Natural killer cell (primary cell): ENCODE measurements at regions of chr9 and their contacts with region 1.

Region 1: GRCh38 chr9:137240861-137241489 is at the start of gene TUBB4B:
- DNase-seq: peak; percentile 96 to 100
- ATAC-seq: peak; percentile 73 to 90 (median 76)
- H3K4me3 ChIP-seq: peak within 1 kb of the TSS; percentile 46
- H3K4me3 Mint-ChIP-seq: peak within 1 kb of the TSS; percentile 88
- H3K27ac ChIP-seq: peak within 1 kb of the TSS; percentile 81
- H3K27ac Mint-ChIP-seq: peak within 1 kb of the TSS; percentile 86 to 94
- H3K4me1 ChIP-seq: peaks cover 53% of the 10 kb centered on the region
- H3K4me1 Mint-ChIP-seq: peaks cover 19 to 33% of the 10 kb centered on the region in 2 donors
- H3K27me3 ChIP-seq: no peaks in the 10 kb centered on the region
- H3K27me3 Mint-ChIP-seq: peaks cover 0 to 4% of the 10 kb centered on the region in 2 donors
- CTCF ChIP-seq: no peak
- total RNA-seq, gene TUBB4B: 84.4 to 121 (median 93.9) TPM

Region 2: DNA sequence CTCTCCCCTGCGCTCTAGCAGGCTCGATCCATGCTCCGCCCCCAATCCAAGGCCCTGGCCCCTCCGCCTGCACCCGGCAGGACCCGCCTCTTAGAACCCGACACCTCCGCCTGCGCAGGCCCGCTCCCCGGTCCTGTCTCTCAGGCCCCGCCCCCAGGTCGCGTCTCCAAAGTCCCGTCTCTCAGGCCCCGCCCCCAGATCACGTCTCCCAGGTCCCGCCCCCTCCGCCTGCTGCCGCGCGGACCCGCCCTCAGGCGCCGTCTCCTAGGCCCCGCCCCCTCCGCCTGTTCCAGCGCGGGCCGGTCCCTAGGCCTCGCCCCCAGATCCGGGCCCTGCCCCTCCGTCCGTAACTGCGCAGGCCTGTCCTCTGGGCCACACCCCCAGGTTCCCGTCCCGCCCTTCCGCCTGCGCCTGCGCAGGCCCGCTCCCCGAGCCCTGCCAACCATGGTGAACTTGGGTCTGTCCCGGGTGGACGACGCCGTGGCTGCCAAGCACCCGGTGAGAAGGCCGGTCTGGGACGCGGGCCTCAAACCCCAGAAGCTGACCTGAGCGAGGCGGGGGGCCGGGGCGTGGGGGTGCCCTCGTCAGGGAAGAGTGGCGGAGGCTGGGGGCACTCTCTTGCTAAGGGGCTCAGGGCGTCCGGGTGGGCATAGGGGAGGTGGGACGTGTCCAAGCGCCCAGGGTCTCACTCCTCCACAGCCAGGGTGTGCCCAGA is 449.9 kb before region 1 on chr9 and contains the start of gene TMEM141:
- intact Hi-C with region 1: loop called (anchors 5 kb)
- DNase-seq: peak; percentile 99 to 100
- ATAC-seq: peak; percentile 84 to 96 (median 86)
- H3K4me3 ChIP-seq: peak within 1 kb of the TSS; percentile 66
- H3K4me3 Mint-ChIP-seq: peak within 1 kb of the TSS; percentile 80
- H3K27ac ChIP-seq: peak within 1 kb of the TSS; percentile 88
- H3K27ac Mint-ChIP-seq: peak within 1 kb of the TSS; percentile 89 to 91
- H3K4me1 ChIP-seq: peaks cover 43% of the 10 kb centered on the region
- H3K4me1 Mint-ChIP-seq: peaks cover 28 to 34% of the 10 kb centered on the region in 2 donors
- H3K27me3 ChIP-seq: no peaks in the 10 kb centered on the region
- H3K27me3 Mint-ChIP-seq: peaks cover 0 to 4% of the 10 kb centered on the region in 2 donors
- CTCF ChIP-seq: no peak
- total RNA-seq, gene TMEM141: 22.4 to 26.9 (median 26.6) TPM

Region 3: DNA sequence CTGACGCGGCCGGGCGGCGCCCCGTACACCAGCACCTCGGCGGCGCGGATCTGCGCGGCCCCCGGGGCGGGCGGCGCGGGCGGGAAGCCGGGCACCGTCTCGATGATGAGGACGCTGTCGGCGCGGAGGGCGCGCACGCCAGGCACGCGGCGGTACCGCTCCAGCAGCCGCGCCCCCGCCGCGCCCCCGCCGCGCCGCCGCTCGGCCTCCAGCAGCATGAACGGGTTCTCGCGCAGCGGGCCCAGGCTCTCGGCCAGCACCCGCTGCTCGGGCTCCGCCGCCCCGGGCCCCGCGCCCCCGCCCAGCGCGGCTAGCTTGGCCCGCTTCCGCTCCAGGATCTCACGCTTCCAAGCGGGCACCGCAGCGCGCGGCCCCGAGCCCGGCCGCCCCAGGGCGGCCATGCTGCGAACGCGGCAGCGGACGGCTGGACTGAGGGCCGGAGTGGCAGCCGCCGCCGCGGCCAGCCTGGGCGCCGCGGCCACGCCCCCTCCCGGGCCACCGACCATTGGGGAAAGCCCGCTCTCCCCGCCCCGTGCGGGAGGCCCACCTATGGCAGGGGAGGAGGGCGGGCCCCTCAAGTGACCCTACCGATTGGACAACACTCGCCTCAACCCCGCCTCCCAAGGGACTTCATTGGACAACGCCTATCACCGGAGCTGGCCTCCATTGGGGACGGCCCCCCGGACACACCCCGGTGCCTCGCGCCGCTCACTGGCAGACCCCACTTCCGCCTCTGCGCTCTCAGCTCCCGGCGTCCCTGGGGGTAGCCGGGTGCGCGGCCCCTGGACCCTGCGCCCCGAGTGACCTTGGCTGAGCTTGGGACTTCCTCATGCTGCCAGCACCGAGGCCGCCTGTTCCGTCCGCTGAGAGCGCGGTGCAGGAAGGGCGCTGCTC is 40.4 kb before region 1 on chr9 and contains the start of gene TPRN:
- intact Hi-C with region 1: loop called (anchors 5 kb)
- DNase-seq: peak; percentile 98
- ATAC-seq: peak; percentile 92 to 99 (median 94)
- H3K4me3 ChIP-seq: peak within 1 kb of the TSS; percentile 75
- H3K4me3 Mint-ChIP-seq: peak within 1 kb of the TSS; percentile 90
- H3K27ac ChIP-seq: peak within 1 kb of the TSS; percentile 82
- H3K27ac Mint-ChIP-seq: peak within 1 kb of the TSS; percentile 83 to 86
- H3K4me1 ChIP-seq: peaks cover 39% of the 10 kb centered on the region
- H3K4me1 Mint-ChIP-seq: peaks cover 16 to 32% of the 10 kb centered on the region in 2 donors
- H3K27me3 ChIP-seq: no peaks in the 10 kb centered on the region
- H3K27me3 Mint-ChIP-seq: no peaks in the 10 kb centered on the region
- CTCF ChIP-seq: no peak
- total RNA-seq, gene TPRN: 8.2 to 10.6 (median 8.4) TPM

Region 4: GRCh38 chr9:137254624-137255447 is 13.9 kb after region 1 on chr9 and contains the start of gene NELFB:
- intact Hi-C with region 1: loop called (anchors 1 kb)
- DNase-seq: peak; percentile 95 to 99
- ATAC-seq: peak; percentile 93 to 96 (median 94)
- H3K4me3 ChIP-seq: peak within 1 kb of the TSS; percentile 85
- H3K4me3 Mint-ChIP-seq: peak within 1 kb of the TSS; percentile 88
- H3K27ac ChIP-seq: no peak within 1 kb of the TSS
- H3K27ac Mint-ChIP-seq: peak within 1 kb of the TSS; percentile 36 to 81
- H3K4me1 ChIP-seq: peaks cover 25% of the 10 kb centered on the region
- H3K4me1 Mint-ChIP-seq: peaks cover 0 to 6% of the 10 kb centered on the region in 2 donors
- H3K27me3 ChIP-seq: no peaks in the 10 kb centered on the region
- H3K27me3 Mint-ChIP-seq: no peaks in the 10 kb centered on the region
- CTCF ChIP-seq: no peak
- total RNA-seq, gene NELFB: 42.9 to 53.8 (median 52.6) TPM

Region 5: DNA sequence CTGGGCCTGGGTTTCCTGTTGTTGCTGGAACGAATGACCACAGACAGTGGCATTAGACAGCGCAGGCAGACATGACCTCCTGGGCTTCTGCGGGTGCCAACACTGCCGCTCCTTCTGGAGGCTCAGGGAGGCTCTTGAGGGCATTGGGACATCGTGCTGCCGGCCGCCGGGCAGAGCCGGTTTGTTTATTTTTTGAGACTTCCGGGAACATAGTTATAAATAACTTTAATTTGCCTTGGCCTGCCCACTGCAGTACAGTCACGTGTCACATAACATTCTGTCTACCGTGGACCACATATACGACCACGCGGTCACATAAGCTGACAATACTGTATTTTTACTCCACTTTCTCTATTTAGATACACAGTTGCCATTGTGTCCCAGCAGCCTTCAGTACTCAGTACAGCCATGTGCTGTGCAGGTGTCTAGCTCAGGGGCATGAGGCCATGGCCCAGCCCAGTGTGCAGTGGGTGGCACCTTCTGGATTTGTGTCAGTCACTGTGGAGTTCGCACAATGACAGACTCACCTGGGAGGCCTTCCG is 28.3 kb after region 1 on chr9:
- intact Hi-C with region 1: no loop called
- DNase-seq: no peak
- ATAC-seq: peak in 1 of 3 donors; percentile 18
- H3K4me3 ChIP-seq: no peak overlapping the region
- H3K4me3 Mint-ChIP-seq: no peak overlapping the region
- H3K27ac ChIP-seq: no peak overlapping the region
- H3K27ac Mint-ChIP-seq: no peak overlapping the region
- H3K4me1 ChIP-seq: peaks cover 26% of the 10 kb centered on the region
- H3K4me1 Mint-ChIP-seq: peaks cover 4 to 15% of the 10 kb centered on the region in 2 donors
- H3K27me3 ChIP-seq: no peaks in the 10 kb centered on the region
- H3K27me3 Mint-ChIP-seq: no peaks in the 10 kb centered on the region
- CTCF ChIP-seq: no peak

Region 6: DNA sequence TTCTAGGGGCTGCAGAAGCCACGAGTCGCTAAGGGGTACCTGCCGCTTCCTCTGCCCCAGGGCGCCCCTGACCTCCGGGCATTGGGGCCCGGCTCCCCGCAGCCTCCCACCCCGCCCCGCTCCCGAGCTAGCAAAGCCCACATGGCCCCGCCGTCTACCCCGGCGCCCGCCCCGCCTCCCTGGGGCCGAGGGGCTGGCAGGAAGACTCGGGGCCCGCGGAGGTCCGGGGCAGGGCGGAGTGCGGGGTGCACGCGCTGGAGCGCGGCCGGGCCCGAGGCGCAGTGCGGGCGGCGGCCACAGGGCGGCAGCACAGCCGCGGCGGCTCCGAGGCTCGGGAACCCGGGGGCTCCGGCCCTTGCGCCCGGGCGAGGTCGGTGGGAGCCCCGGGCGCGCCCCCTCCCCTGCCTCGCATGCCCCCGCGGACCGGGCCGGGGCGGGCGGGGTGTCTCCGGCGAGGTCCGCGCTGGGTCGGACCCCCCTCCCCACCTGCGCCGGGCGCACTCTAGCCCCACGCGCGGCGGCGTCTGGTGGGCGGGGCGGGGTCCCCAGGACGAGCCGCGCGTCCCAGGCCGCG is 54.4 kb after region 1 on chr9:
- intact Hi-C with region 1: no loop called
- DNase-seq: peak; percentile 72 to 75
- ATAC-seq: peak; percentile 91 to 96 (median 94)
- H3K4me3 ChIP-seq: no peak overlapping the region
- H3K4me3 Mint-ChIP-seq: peak overlapping the region; percentile 17
- H3K27ac ChIP-seq: no peak overlapping the region
- H3K27ac Mint-ChIP-seq: no peak overlapping the region
- H3K4me1 ChIP-seq: peaks cover 18% of the 10 kb centered on the region
- H3K4me1 Mint-ChIP-seq: peaks cover 0 to 16% of the 10 kb centered on the region in 2 donors
- H3K27me3 ChIP-seq: peaks cover 38% of the 10 kb centered on the region
- H3K27me3 Mint-ChIP-seq: peaks cover 9 to 17% of the 10 kb centered on the region in 2 donors
- CTCF ChIP-seq: peak; percentile 64

Region 7: GRCh38 chr9:137339045-137339907 is 98.3 kb after region 1 on chr9:
- intact Hi-C with region 1: no loop called
- DNase-seq: no peak
- ATAC-seq: no peak
- H3K4me3 ChIP-seq: no peak overlapping the region
- H3K4me3 Mint-ChIP-seq: no peak overlapping the region
- H3K27ac ChIP-seq: no peak overlapping the region
- H3K27ac Mint-ChIP-seq: no peak overlapping the region
- H3K4me1 ChIP-seq: no peaks in the 10 kb centered on the region
- H3K4me1 Mint-ChIP-seq: no peaks in the 10 kb centered on the region
- H3K27me3 ChIP-seq: no peaks in the 10 kb centered on the region
- H3K27me3 Mint-ChIP-seq: no peaks in the 10 kb centered on the region
- CTCF ChIP-seq: no peak